GM10248 (cell line): ENCODE measurements at regions of chr2 and their contacts with region 1.

Region 1: DNA sequence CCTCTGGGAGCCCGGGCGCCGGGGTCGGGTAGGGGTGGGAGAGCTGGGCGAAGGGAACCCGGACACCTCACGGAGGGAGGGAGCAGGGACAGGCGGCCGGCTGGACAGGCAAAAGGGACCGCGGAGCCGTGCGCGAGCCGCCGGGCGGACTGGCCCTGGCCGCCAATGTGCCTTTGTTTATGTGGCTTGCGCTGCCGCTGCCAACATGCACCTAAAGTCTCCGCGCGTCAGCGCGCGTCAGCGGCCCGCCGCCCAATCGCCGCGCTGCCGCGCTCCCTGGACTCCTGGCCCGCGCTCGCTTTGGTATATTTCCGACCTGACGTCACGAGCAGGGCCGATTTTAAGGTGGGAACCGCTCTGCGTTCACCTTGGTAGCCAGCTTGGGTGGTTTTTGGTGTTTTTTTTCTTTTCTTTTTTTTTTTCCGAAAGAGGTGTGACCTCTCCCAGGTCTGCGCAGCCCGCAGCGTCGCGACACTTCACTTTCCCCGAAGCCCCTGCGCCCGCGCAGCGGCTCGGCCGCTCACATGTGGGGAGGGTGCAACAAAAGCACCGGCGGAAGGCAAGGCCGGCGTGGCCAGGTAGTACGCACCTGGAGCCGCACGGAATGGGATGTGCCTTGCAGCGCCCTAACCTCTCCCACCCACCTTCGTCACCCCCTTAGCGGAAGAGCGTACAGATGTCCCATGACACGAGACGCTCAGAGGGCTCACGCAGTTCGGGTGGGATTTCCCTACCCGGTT is at the start of gene NR4A2:
- DNase-seq: peak; percentile 86
- CTCF ChIP-seq: no peak

Region 2: DNA sequence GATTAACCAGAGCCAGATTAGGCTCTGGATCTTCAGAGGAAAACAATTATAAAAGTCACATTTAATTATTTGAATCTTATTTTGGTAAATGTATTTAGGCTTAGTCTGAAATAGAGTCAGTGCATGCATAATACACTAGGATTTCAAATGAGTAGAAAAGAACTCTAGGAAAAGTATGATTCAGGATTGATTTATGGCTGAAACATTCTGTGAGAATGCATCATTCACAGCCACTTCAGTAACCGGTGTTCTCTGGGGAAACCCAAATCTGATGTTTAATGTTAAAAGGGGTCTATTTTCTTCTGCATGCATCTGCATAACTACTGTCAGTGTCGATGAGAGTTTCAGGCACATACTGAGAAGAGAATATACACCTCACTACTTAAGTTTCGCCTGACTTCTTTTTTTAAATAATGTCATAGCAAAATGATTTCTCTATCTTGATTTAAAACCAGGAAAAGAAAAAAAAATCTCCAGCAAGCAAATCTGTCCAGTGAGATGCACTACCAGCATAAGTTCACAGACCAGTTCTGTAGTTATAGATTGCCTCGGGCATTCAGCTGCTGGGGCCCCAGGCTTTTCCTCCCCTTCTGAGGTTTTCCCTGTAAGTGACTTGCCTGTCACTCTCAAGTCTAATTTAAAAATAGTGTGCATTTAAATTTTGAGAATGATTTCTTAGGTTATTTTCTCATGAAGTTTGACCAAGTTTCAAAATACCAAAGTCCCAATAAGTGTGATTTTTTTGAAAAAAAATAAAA is 501.7 kb before region 1 on chr2:
- CTCF ChIA-PET with region 1: no interaction called
- POLR2A ChIA-PET with region 1: no interaction called
- DNase-seq: no peak
- CTCF ChIP-seq: no peak

Region 3: DNA sequence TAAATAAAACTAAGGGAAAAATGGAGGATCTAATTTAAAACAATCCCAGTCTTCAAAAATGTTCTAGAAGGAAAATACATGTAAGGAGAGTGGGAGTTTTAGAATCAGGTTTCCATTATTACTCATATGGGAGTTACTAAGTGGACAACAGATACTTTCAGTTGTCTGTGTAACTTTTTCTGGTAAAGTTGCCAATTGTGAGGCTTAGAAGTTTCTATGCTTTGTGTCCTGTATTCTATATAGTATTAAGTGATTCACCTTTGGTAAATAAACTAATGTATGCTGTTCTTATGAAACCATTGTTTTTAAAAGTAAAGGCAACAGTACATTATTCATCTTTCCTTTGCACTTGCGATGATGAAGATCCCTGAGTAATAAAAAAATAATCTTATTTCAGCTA is 275.1 kb before region 1 on chr2:
- CTCF ChIA-PET with region 1: no interaction called
- POLR2A ChIA-PET with region 1: no interaction called
- DNase-seq: no peak
- CTCF ChIP-seq: no peak

Region 4: GRCh38 chr2:156310773-156311172 is 21.9 kb before region 1 on chr2:
- CTCF ChIA-PET with region 1: no interaction called
- POLR2A ChIA-PET with region 1: no interaction called
- DNase-seq: no peak
- CTCF ChIP-seq: no peak

Region 5: GRCh38 chr2:156400706-156401678 is 68.3 kb after region 1 on chr2:
- CTCF ChIA-PET with region 1: interaction called, 19 read pairs
- POLR2A ChIA-PET with region 1: no interaction called
- DNase-seq: peak; percentile 59
- CTCF ChIP-seq: no peak

Region 6: DNA sequence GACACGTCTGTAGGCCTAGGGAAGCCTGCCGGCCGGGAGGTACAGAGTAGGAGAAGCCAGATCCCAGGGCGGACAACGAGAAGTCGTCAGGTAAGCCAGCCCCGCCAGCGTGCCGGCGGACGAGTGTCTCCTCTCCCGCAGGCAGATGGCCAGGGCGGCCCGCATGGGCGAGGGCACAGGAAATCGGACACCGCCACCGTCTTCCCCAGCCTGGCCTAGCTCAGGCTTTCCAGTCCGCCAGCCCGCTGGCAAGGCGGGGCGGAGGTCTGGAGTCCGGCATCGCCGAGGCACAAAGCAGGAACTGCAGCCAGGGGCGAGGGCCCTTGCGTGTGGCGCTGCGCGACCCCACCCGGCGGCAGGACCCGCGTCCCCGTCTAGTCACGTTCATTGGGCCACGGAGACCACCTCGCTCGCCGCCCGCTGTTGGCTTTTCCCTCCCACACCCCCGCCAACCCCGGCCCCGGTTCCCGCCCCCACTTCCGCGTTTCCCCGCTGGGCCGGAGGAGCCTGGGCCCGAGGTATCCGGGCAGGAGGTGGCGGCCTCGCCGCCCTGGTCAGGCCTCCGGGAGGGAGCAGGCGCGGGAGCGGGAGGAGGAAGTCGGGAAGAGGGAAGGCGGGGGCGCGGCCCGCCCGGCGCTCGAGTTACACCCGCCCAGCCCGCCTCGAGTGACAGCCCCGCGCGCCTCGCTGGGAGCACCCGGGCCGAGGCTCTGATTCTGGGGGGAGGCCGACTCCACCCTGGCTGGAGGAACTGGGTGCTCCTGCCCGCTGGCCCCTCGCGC is 103.2 kb after region 1 on chr2 and contains the start of gene GPD2:
- CTCF ChIA-PET with region 1: interaction called, 10 read pairs
- POLR2A ChIA-PET with region 1: interaction called, 3 read pairs
- DNase-seq: peak; percentile 63
- CTCF ChIP-seq: no peak

Region 7: DNA sequence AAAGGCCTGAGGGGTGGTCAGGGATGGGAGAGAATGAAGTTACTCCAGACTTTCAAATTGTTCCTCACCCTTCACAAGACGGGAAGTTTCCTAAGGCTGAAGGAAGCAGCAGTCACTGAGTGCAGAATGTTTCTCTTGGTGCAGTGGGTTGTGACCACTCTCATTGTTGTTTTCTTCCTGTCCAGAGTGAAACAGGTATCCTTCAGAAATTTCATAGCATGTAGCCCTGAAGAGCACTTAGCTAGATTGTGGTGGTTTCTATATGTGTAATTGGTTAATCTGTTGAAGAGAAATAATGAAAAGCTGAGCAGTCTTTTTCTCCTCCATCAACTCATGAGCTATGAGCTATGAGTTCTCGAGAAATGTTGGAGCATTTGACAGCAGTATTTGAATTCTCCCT is 200.3 kb after region 1 on chr2:
- CTCF ChIA-PET with region 1: interaction called, 10 read pairs
- POLR2A ChIA-PET with region 1: no interaction called
- DNase-seq: peak; percentile 16
- CTCF ChIP-seq: no peak

Region 8: DNA sequence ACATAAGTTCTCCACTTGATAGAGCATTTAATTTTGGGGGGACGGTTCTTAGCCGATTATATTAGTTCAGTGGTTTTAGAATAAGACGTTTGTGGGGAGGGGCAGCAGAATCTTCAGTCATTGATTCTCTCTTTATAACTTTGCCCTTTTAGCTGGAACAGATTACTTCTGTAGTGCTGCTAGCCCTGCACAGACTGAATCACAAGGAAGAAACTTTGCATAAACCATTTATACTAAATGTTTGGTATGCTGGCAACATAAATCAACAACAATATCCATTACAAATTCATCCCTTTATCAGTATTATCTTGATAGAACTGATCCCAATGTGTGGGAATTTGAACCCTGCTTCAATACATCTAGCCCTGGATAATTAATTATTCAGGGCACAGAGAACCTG is 215.7 kb after region 1 on chr2:
- CTCF ChIA-PET with region 1: no interaction called
- POLR2A ChIA-PET with region 1: no interaction called
- DNase-seq: no peak
- CTCF ChIP-seq: no peak

Region 9: DNA sequence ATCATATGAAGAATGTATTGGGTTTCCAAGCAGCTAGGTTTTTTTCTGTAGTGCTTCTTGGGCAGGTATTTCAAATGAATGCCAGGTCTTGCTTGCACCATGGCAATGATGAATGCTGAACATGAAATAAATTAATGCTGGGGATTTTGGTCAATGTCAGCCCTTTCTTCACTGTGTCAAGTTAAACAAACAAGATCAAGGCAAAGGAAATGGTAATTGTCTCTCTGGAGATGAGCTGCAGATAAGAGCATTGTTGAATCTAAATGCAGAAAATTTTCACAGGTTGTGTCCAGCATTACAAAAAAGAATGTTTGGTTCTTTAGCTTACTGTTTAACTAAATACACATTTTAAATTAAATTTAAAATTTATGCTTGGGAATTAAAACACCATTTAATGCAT is 247.8 kb after region 1 on chr2:
- CTCF ChIA-PET with region 1: interaction called, 10 read pairs
- POLR2A ChIA-PET with region 1: no interaction called
- DNase-seq: no peak
- CTCF ChIP-seq: no peak

Region 10: GRCh38 chr2:156589381-156590079 is 256.8 kb after region 1 on chr2:
- CTCF ChIA-PET with region 1: interaction called, 51 read pairs
- POLR2A ChIA-PET with region 1: interaction called, 3 read pairs
- DNase-seq: peak; percentile 15
- CTCF ChIP-seq: peak; percentile 45